Activated T-helper 1 cell treated with anti-CD3 and anti-CD28 coated beads, Interleukin-12 subunit alpha, Interleukin-12 subunit beta, Interleukin-2, Interleukin-4 antibody, amounts not matched to agents 30 ng/mL and 10 ng/mL and 1 ng/mL, durations not matched to agents 14 hours and 24 hours and 36 hours (primary cell): ENCODE measurements at regions of chr12 and their contacts with region 1.

Region 1: GRCh38 chr12:9027161-9028059 is 38.1 kb downstream of the KLRG1 start:
- DNase-seq: no peak
- H3K4me3 Mint-ChIP-seq: peak overlapping the region; percentile 9
- H3K27ac Mint-ChIP-seq: peak overlapping the region; percentile 88
- H3K4me1 Mint-ChIP-seq: peaks cover 9% of the 10 kb centered on the region
- H3K27me3 Mint-ChIP-seq: no peaks in the 10 kb centered on the region

Region 2: GRCh38 chr12:8493084-8493483 is 534.3 kb before region 1 on chr12:
- intact Hi-C with region 1: loop called (anchors 5 kb)
- DNase-seq: peak; percentile 42
- H3K4me3 Mint-ChIP-seq: no peak overlapping the region
- H3K27ac Mint-ChIP-seq: peak overlapping the region; percentile 24
- H3K4me1 Mint-ChIP-seq: peaks cover 23% of the 10 kb centered on the region
- H3K27me3 Mint-ChIP-seq: peaks cover 18% of the 10 kb centered on the region

Region 3: DNA sequence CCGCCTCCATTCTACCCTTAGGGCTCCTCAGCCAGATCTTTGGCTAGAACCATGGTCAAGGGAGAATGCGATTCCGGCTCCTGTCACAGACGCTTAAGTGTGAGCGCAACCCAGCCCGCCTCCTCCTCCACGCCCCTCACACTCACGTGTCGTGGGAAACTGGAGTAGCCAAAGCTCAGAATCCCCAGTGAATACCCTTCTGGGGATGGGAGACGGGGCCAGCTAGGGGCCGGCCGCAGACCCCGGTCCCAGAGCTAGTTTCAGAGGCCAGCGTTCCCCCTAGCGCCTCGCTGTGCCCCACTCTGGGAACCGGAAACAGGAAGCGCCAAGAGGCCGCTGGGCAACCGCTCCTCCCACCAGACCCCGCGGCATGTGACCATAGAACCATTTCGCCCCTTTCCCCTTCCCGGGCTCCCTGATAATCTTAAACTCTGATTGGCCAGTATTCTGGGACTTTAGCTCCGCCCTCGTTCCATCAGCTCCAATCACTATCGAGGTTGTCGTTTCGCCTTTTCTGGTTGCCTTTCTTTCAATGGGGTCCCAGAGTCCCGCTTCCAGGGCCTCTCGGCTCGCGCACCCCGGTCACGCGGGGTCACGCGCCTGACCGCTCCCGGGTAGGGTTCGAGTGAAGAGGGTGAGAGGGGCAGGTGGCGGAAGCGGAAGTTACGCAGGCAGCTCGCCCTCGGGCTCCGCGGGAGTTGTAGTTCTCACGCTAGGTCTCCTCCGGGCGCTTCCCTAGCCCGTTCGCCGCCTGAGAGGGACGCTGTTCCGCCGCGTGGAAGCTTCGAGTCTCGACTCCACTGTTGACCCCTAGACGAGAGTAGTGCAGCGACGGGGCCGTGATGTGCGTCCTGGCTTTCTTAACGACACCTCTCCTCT is 77.8 kb before region 1 on chr12 and contains the start of gene M6PR:
- intact Hi-C with region 1: loop called (anchors 1 kb)
- DNase-seq: peak; percentile 86
- H3K4me3 Mint-ChIP-seq: peak within 1 kb of the TSS; percentile 100
- H3K27ac Mint-ChIP-seq: peak within 1 kb of the TSS; percentile 92
- H3K4me1 Mint-ChIP-seq: peaks cover 72% of the 10 kb centered on the region
- H3K27me3 Mint-ChIP-seq: no peaks in the 10 kb centered on the region
- total RNA-seq, gene M6PR: 179 and 192 TPM in 2 replicates

Region 4: GRCh38 chr12:8996682-8997360 is 30.6 kb before region 1 on chr12:
- intact Hi-C with region 1: loop called (anchors 1 kb)
- DNase-seq: peak; percentile 6
- H3K4me3 Mint-ChIP-seq: no peak overlapping the region
- H3K27ac Mint-ChIP-seq: no peak overlapping the region
- H3K4me1 Mint-ChIP-seq: peaks cover 24% of the 10 kb centered on the region
- H3K27me3 Mint-ChIP-seq: peaks cover 14% of the 10 kb centered on the region

Region 5: GRCh38 chr12:9244894-9245293 is 217.5 kb after region 1 on chr12:
- intact Hi-C with region 1: loop called (anchors 1 kb)
- DNase-seq: no peak
- H3K4me3 Mint-ChIP-seq: peak overlapping the region; percentile 66
- H3K27ac Mint-ChIP-seq: peak overlapping the region; percentile 95
- H3K4me1 Mint-ChIP-seq: peaks cover 23% of the 10 kb centered on the region
- H3K27me3 Mint-ChIP-seq: peaks cover 2% of the 10 kb centered on the region

Region 6: GRCh38 chr12:10212201-10213131 is 1185.1 kb after region 1 on chr12 and contains the start of gene GABARAPL1:
- intact Hi-C with region 1: loop called (anchors 2 kb)
- DNase-seq: peak; percentile 76
- H3K4me3 Mint-ChIP-seq: peak within 1 kb of the TSS; percentile 84
- H3K27ac Mint-ChIP-seq: peak within 1 kb of the TSS; percentile 93
- H3K4me1 Mint-ChIP-seq: peaks cover 32% of the 10 kb centered on the region
- H3K27me3 Mint-ChIP-seq: peaks cover 23% of the 10 kb centered on the region
- total RNA-seq, gene GABARAPL1: 5.0 and 6.6 TPM in 2 replicates